IMR-90 (cell line): ENCODE measurements at regions of chr19 and their contacts with region 1.

Region 1: GRCh38 chr19:15251749-15252397 is 19.6 kb upstream of the EPHX3 start:
- DNase-seq: peak; percentile 96
- ATAC-seq: peak; percentile 62
- H3K4me3 ChIP-seq: no peak overlapping the region
- H3K27ac ChIP-seq: peak overlapping the region; percentile 74
- H3K4me1 ChIP-seq: peaks cover 50% of the 10 kb centered on the region
- H3K27me3 ChIP-seq: no peaks in the 10 kb centered on the region
- CTCF ChIP-seq: peak; percentile 65
- POLR2A ChIP-seq: no peak; the same call in none of the 2 replicates
- RAD21 ChIP-seq: peak; percentile 56

Region 2: GRCh38 chr19:15091901-15092753 is 159.7 kb before region 1 on chr19:
- CTCF ChIA-PET with region 1: no interaction called
- POLR2A ChIA-PET with region 1: no interaction called
- dilution Hi-C with region 1: no loop called
- in situ Hi-C with region 1: no loop called
- intact Hi-C with region 1: loop called (anchors 1 kb)
- DNase-seq: peak; percentile 71
- ATAC-seq: peak; percentile 75
- H3K4me3 ChIP-seq: no peak overlapping the region
- H3K27ac ChIP-seq: no peak overlapping the region
- H3K4me1 ChIP-seq: peaks cover 3% of the 10 kb centered on the region; the same call in 1 of the 2 replicates
- H3K27me3 ChIP-seq: peaks cover 11% of the 10 kb centered on the region
- CTCF ChIP-seq: peak; percentile 79
- POLR2A ChIP-seq: no peak
- RAD21 ChIP-seq: peak; percentile 72

Region 3: DNA sequence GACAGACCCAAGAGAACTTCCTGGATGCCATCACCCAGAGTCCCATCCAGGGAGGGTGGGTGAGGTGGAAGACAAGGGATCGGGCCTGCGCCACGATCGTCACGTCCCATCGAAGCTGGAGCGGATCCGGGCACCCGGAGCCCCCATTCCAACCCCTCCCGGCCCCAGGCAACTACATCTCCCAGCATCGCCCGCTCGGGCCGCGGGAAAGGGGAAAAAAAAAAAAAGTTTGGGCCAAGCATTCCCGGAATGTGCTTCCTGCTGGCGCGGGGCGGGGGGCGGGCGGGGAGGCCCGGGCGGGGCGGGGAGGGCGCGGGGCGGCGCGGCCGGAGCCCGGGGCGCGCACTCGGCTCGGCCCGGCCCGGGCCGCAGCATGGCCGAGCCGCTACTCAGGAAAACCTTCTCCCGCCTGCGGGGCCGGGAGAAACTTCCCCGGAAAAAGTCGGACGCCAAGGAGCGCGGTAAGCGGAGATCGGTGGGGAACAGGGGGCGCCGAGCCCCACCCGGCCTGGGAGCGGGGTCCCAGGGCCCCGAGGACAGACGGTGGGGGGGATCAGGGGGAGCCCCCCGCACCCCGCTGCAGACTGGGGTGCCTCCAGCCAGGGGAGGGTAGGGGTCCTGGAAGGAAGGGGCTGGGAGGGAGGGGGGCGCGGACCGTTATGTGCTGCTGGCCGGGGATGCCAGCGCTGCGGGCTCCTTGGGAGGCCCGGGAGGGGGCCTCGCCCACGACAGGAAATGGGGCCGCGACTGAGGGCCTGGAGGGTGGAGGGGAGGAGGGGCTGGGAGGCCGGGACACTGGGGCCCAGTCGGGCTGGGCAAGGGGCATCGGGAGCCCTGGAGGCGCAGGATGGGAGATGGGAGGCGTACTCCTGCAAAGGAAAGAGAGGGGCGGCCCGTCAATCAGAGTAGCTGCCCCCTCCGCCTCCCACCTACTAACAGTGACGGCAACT is 144.5 kb before region 1 on chr19 and contains the start of gene SYDE1:
- CTCF ChIA-PET with region 1: no interaction called
- POLR2A ChIA-PET with region 1: no interaction called
- dilution Hi-C with region 1: no loop called
- in situ Hi-C with region 1: loop called (anchors 10 kb)
- intact Hi-C with region 1: loop called (anchors 5 kb)
- DNase-seq: peak; percentile 55
- ATAC-seq: peak; percentile 87
- H3K4me3 ChIP-seq: peak within 1 kb of the TSS; percentile 89
- H3K27ac ChIP-seq: peak within 1 kb of the TSS; percentile 96
- H3K4me1 ChIP-seq: peaks cover 6% of the 10 kb centered on the region
- H3K27me3 ChIP-seq: no peaks in the 10 kb centered on the region
- CTCF ChIP-seq: no peak
- POLR2A ChIP-seq: peak; percentile 79
- RAD21 ChIP-seq: no peak
- total RNA-seq, gene SYDE1: 18.6 and 19.4 TPM in 2 replicates

Region 4: DNA sequence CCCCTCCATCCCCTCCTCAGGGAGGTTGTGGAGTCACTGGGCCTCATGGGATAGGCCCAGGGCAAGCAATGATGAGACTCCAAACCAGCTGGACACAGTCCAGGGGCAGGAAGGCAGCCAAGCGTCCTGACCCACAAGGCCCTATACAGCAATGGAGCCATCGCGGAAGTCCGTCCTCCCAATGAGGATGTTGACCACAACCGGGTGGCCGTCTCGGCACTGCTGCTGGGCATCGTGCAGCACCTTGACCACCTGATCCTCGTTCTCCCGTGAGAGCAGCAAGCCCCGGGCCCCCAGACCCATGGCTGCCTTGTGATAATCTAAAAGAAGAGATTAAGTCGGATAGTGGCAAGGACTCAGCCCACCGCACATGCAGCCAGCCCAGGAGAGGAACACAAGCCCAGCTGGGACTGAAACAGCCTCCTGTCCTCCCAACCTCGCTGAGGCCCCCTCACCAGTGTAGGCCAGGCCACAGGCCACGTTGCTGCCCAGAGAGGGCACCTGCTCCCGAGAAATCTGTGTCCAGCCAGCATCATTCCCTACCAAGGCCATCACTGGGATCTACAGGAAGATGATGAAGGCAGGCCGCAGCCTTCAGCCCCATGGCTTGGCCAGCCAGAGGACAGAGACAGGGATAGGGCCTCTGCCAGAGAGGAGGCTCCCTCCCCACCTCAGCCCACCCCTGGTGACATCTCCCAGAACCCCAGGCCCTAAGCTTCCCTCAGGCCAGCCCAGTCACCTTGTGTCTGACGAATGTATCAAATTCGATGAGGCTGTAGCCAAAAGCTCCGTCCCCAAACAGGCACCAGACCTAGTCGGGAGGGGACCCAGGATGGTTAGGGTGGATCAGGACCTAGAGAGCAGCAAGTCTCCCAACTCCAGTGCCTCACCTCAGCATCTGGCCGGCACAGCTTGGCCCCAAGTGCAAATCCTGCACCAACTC is 136.5 kb before region 1 on chr19:
- CTCF ChIA-PET with region 1: no interaction called
- POLR2A ChIA-PET with region 1: no interaction called
- dilution Hi-C with region 1: no loop called
- in situ Hi-C with region 1: loop called (anchors 10 kb)
- intact Hi-C with region 1: no loop called
- DNase-seq: peak; percentile 68
- ATAC-seq: peak; percentile 61
- H3K4me3 ChIP-seq: no peak overlapping the region
- H3K27ac ChIP-seq: no peak overlapping the region
- H3K4me1 ChIP-seq: no peaks in the 10 kb centered on the region; the same call in 1 of the 2 replicates
- H3K27me3 ChIP-seq: no peaks in the 10 kb centered on the region
- CTCF ChIP-seq: no peak
- POLR2A ChIP-seq: no peak
- RAD21 ChIP-seq: no peak

Region 5: DNA sequence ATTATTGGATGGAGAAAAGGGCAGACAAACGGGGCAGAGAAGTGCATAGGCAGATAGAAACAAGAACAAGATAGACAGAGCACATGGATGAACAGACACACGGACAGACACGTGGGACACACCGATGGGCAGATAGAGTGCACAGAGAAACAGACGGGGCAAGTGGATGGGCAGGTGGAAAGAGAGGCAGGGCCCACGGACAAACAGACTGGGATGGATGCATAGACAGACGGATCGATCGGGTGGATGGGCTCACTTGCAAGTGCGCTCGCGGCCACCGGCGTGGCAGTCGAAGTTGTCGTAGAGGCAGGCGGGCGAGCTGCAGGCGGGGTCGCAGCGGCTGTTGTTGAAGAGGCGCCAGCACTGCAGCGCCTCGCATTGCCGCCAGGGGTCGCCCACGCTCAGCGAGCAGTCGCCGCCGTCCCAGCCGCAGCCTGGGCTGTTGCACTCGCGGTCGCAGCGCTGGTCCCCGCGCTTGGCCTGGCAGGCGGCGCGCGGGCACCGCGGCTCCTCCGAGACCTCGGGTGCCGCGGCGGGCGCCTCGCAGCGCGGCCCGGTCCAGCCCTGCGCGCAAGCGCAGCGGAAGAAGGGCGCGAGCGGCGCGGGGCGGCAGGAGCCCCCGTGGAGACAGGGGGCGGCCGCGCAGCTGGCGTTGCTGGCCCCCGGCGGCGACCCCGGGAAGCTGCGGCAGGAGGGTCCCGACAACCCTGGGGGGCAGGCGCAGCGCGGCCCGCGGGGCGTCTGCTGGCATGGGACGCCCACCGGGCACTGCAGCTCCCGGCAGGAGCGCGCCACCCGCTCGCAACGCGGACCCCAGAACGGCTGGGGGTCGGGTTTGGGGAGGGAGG is 74.4 kb before region 1 on chr19:
- CTCF ChIA-PET with region 1: interaction called, 3 read pairs
- POLR2A ChIA-PET with region 1: no interaction called
- dilution Hi-C with region 1: no loop called
- in situ Hi-C with region 1: no loop called
- intact Hi-C with region 1: loop called (anchors 1 kb)
- DNase-seq: peak; percentile 64
- ATAC-seq: peak; percentile 99
- H3K4me3 ChIP-seq: no peak overlapping the region
- H3K27ac ChIP-seq: no peak overlapping the region
- H3K4me1 ChIP-seq: peaks cover 2% of the 10 kb centered on the region; the same call in 1 of the 2 replicates
- H3K27me3 ChIP-seq: no peaks in the 10 kb centered on the region
- CTCF ChIP-seq: peak; percentile 98
- POLR2A ChIP-seq: no peak
- RAD21 ChIP-seq: peak; percentile 97

Region 6: DNA sequence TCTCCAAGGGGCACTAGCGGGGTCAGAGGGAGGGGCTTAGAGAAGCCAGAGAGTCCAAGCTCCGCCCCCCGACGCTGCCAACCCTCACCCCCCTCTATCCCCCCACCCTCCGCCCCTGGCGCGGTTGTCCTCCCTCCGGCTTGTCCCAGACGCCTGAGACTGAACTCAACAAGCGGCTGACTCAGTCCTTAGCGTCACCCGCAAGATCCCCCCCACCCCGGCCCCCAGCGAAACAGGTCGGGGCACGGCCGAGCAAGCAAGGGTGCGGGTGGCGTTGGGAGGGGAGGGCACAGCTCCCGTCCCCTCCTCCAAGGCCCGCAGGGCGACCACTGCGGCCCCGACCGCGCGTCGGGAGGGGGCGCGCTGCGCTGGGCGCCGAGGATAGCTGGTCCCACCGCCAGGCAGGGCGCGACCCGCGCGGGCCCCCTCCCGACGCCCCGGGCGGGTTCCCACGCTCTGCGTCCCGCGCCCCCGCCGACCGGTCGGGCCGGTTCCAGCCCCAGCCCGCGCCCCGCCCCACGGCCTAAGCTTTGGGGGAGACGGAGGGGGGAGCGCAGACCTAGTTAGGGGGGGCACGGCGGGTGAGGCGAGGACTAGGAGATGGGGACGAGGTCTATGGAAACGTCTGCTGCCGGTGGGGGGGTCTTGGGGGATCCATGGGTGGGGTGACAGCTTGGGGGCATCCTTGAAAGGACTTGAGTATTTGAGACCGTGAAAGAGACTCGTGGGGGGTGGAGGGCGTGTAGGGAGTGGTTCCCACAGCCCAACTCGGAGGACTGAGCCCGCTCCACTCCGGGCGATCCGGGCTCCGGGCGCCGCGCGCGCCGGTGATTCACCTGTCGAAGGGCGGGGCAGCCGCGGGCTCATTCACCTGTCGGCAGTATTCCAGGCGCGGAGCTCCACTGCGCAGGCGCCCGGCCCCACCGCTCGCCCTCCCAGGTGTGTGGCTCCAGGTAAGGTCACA is 56.2 kb before region 1 on chr19:
- CTCF ChIA-PET with region 1: no interaction called
- POLR2A ChIA-PET with region 1: interaction called, 3 read pairs
- dilution Hi-C with region 1: no loop called
- in situ Hi-C with region 1: no loop called
- intact Hi-C with region 1: loop called (anchors 5 kb)
- DNase-seq: peak; percentile 61
- ATAC-seq: peak; percentile 69
- H3K4me3 ChIP-seq: peak overlapping the region; percentile 36
- H3K27ac ChIP-seq: no peak overlapping the region; the same call in 1 of the 2 replicates
- H3K4me1 ChIP-seq: peaks cover 13% of the 10 kb centered on the region
- H3K27me3 ChIP-seq: no peaks in the 10 kb centered on the region
- CTCF ChIP-seq: peak; percentile 42
- POLR2A ChIP-seq: no peak
- RAD21 ChIP-seq: peak; percentile 33

Region 7: DNA sequence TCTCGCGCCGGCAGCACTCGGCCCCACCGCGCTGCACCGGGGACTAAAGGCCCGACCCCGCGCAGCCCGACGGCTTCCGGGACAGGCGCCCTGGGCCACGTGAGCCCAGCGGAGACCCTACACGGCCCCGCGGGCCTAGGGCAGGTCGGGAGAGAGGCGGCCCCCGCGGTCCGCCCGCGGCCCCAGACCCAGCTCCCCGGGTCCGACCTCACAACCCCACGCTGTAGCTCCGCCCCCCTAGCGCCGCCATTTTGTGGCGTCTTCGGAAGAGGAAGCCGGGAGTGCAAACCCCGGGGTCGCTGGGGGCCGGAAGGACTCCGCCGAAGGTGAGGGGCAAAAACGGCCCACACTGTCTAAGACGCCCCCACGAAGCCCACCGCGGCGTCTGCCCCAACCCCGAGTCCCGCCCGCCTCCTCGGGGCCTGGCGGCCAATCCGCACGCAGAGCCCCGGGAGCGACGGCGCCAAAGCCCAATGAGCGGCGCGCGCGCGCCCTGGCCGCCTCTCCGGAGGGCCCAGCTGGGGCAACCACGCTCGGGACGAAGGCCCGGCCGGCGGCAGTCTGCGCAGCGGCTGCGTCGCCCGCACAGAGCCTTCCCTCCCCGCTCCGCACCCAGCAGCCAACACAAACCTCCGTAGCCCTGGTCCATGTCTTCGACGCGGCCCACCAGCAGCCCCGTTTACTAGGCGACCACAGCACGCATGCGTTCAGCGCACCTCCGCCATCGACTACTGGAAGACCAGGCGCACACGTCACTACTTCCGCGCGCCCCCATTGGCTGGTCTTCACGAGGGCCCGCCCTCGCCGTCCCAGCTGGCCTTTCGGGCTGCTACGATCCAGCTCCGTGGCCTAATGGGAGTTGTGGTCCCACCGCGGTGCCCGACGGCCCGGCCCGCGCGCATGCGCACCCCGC is 127.5 kb after region 1 on chr19 and contains the start of gene AKAP8:
- CTCF ChIA-PET with region 1: no interaction called
- POLR2A ChIA-PET with region 1: no interaction called
- dilution Hi-C with region 1: no loop called
- in situ Hi-C with region 1: no loop called
- intact Hi-C with region 1: loop called (anchors 5 kb)
- DNase-seq: peak; percentile 98
- ATAC-seq: peak; percentile 89
- H3K4me3 ChIP-seq: peak within 1 kb of the TSS; percentile 92
- H3K27ac ChIP-seq: peak within 1 kb of the TSS; percentile 96
- H3K4me1 ChIP-seq: peaks cover 12% of the 10 kb centered on the region
- H3K27me3 ChIP-seq: no peaks in the 10 kb centered on the region
- CTCF ChIP-seq: no peak
- POLR2A ChIP-seq: peak; percentile 83
- RAD21 ChIP-seq: no peak
- total RNA-seq, gene AKAP8: 12.2 and 16.9 TPM in 2 replicates